ENCODE measurements at regions of chr1 and their contacts with region 1.

Region 1: GRCh38 chr1:231724876-231725724 is 98.5 kb downstream of the DISC1 start:
- DNase-seq: no peak

Region 2: GRCh38 chr1:231757101-231757404 is 32.0 kb after region 1 on chr1:
- intact Hi-C with region 1: no loop called
- DNase-seq: no peak

Region 3: DNA sequence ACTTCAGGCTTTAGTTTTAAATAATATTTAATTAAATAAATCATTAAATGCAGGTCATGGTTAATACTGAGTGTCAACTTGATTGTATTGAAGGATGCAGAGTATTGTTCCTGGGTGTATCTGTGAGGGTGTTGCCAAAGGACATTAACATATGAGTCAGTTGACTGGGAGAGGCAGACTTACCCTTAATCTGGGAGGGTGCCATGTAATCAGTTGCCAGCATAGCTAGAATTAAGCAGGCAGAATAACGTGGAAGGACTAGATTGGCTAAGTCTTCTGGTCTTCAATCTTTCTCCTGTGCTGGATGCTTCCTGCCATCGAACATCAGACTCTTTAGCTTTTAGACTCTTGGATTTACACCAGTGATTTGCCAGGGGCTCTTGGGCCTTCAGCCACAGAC is 1687.7 kb after region 1 on chr1:
- intact Hi-C with region 1: loop called in 1 of 2 experiments (anchors 5 kb)
- DNase-seq: no peak

Measured in posterior vena cava (tissue), 2 donors.